H1 (cell line): ENCODE measurements at regions of chr1 and their contacts with region 1.

Region 1: DNA sequence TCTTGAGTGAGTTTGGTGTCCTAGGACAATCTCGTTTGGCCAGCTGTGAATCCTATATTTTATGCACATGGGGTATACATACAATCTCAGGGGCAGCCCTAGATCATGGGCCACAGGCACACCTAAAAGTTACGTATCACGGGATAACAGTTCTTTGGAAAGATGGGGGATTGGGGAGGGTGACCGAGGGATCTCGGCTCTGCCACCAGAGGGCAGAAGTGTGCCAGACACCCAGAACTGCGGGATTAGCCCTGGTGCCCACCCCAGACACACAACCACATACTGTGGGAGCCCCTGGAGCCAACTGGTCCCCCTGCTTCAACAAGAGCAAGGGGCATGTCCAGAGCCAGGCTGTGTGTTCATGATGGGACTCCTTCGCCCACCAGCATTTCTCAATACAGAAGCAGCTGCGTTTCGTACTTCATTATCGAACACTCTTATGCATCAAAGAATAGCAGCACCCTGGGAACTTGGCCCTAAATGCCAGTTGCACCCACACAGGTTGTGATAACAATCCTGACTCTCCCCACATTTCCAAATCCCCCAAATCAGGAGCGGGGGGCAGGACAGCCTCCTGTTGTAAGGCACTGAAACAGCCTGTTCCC is 37.4 kb downstream of the TMCO4 start:
- DNase-seq: peak in 1 of 2 experiments; percentile 84
- H3K4me3 ChIP-seq: no peak overlapping the region
- H3K27ac ChIP-seq: no peak overlapping the region
- H3K4me1 ChIP-seq: no peaks in the 10 kb centered on the region
- H3K27me3 ChIP-seq: no peaks in the 10 kb centered on the region
- CTCF ChIP-seq: peak; percentile 86 to 93 (median 92)
- EP300 ChIP-seq: no peak
- POLR2A ChIP-seq: no peak
- RAD21 ChIP-seq: peak; percentile 86 to 89

Region 2: GRCh38 chr1:19695772-19696171 is 66.5 kb before region 1 on chr1:
- CTCF ChIA-PET with region 1: no interaction called
- POLR2A ChIA-PET with region 1: no interaction called
- DNase-seq: no peak
- H3K4me3 ChIP-seq: no peak overlapping the region
- H3K27ac ChIP-seq: no peak overlapping the region
- H3K4me1 ChIP-seq: no peaks in the 10 kb centered on the region
- H3K27me3 ChIP-seq: no peaks in the 10 kb centered on the region
- CTCF ChIP-seq: peak in 1 of 3 experiments; percentile 19; a peak in 1 of 4 replicates
- EP300 ChIP-seq: no peak
- POLR2A ChIP-seq: no peak
- RAD21 ChIP-seq: no peak

Region 3: GRCh38 chr1:19715334-19716203 is 46.7 kb before region 1 on chr1:
- CTCF ChIA-PET with region 1: interaction called, 11 read pairs
- POLR2A ChIA-PET with region 1: no interaction called
- DNase-seq: peak; percentile 96 to 98
- H3K4me3 ChIP-seq: no peak overlapping the region
- H3K27ac ChIP-seq: no peak overlapping the region
- H3K4me1 ChIP-seq: peaks cover 0 to 3% (median 0%) of the 10 kb centered on the region in 4 experiments; a peak in 1 of 7 replicates
- H3K27me3 ChIP-seq: no peaks in the 10 kb centered on the region
- CTCF ChIP-seq: peak; percentile 80 to 99 (median 97)
- EP300 ChIP-seq: peak in 1 of 2 experiments; percentile 23; a peak in 1 of 3 replicates
- POLR2A ChIP-seq: no peak
- RAD21 ChIP-seq: peak; percentile 69 to 77

Region 4: DNA sequence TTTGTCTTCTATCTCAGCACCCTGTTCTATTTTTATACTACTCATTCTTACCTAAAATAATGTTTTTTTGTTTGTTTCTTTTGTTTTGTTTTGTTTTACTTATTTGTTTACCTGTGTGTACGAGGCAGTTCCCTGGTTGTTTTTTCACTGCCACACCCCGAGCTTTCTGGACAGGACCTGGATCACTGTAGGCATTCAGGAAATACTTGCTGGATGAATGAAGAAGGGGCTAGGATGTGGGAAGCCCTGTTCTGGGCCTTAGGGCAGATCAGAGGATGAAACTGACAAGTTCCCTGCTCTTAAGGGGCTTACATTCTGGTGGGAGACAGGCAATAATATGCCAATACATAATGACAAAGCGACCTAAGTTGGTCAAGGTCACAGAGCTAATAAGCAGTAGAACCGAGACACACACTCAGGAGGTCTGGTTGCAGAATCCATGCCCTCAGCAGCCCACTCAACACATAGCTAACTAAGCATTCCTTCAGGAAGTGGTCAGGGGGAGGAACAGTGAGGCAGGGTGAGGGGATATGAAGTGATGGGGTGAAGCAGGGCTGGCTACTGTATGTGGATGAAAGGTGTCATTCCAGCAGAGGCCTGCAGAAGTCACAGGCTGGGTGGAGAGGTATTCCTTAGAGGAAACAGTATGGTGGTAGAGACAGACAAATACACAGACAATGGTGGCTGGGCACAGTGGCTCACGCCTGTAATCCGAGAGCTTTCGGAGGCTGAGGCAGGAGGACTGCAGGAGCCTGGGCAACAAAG is 23.2 kb after region 1 on chr1:
- CTCF ChIA-PET with region 1: interaction called, 11 read pairs
- POLR2A ChIA-PET with region 1: no interaction called
- DNase-seq: no peak
- H3K4me3 ChIP-seq: no peak overlapping the region
- H3K27ac ChIP-seq: no peak overlapping the region
- H3K4me1 ChIP-seq: peaks cover 8 to 11% (median 10%) of the 10 kb centered on the region in 4 experiments
- H3K27me3 ChIP-seq: peaks cover 4 to 33% (median 28%) of the 10 kb centered on the region in 4 experiments
- CTCF ChIP-seq: no peak
- EP300 ChIP-seq: no peak
- POLR2A ChIP-seq: no peak
- RAD21 ChIP-seq: 0 out of 4 replicates have a peak, but pooled peaks of 1 of the 2 experiments have one; percentile 4

Region 5: GRCh38 chr1:19825298-19825697 is 63.0 kb after region 1 on chr1:
- CTCF ChIA-PET with region 1: interaction called, 21 read pairs
- POLR2A ChIA-PET with region 1: interaction called, 3 read pairs
- DNase-seq: peak; percentile 36 to 59
- H3K4me3 ChIP-seq: no peak overlapping the region
- H3K27ac ChIP-seq: no peak overlapping the region
- H3K4me1 ChIP-seq: no peaks in the 10 kb centered on the region; a peak in 3 of 7 replicates
- H3K27me3 ChIP-seq: no peaks in the 10 kb centered on the region; a peak in 2 of 7 replicates
- CTCF ChIP-seq: peak; percentile 26 to 52 (median 45)
- EP300 ChIP-seq: no peak
- POLR2A ChIP-seq: no peak
- RAD21 ChIP-seq: peak; percentile 25 to 49; a peak in 3 of 4 replicates